Heart right ventricle (tissue), 16 donors: ENCODE measurements at regions of chr11 and their contacts with region 1.

Region 1: GRCh38 chr11:68383976-68384501 is 71.6 kb downstream of the LRP5 start:
- DNase-seq: peak; percentile 74 to 75
- ATAC-seq: peak in 5 of 8 donors; percentile 3 to 50 (median 26)
- H3K4me3 ChIP-seq: no peak overlapping the region
- H3K27ac ChIP-seq: peak overlapping the region in 4 of 10 donors; percentile 35 to 91 (median 60)
- H3K4me1 ChIP-seq: peaks cover 11 to 57% (median 53%) of the 10 kb centered on the region in 9 donors
- H3K27me3 ChIP-seq: no peaks in the 10 kb centered on the region
- CTCF ChIP-seq: peak; percentile 88 to 95 (median 93)

Region 2: GRCh38 chr11:68257475-68258362 is 126.3 kb before region 1 on chr11:
- intact Hi-C with region 1: loop called (anchors 2 to 5 kb)
- DNase-seq: peak; percentile 94 to 97
- ATAC-seq: peak; percentile 70 to 91 (median 86)
- H3K4me3 ChIP-seq: peak overlapping the region in 4 of 10 donors; percentile 18 to 23 (median 20)
- H3K27ac ChIP-seq: peak overlapping the region in 1 of 10 donors; percentile 36
- H3K4me1 ChIP-seq: peaks cover 0 to 30% (median 6%) of the 10 kb centered on the region in 9 donors
- H3K27me3 ChIP-seq: no peaks in the 10 kb centered on the region
- CTCF ChIP-seq: peak; percentile 78 to 94 (median 89)

Region 3: DNA sequence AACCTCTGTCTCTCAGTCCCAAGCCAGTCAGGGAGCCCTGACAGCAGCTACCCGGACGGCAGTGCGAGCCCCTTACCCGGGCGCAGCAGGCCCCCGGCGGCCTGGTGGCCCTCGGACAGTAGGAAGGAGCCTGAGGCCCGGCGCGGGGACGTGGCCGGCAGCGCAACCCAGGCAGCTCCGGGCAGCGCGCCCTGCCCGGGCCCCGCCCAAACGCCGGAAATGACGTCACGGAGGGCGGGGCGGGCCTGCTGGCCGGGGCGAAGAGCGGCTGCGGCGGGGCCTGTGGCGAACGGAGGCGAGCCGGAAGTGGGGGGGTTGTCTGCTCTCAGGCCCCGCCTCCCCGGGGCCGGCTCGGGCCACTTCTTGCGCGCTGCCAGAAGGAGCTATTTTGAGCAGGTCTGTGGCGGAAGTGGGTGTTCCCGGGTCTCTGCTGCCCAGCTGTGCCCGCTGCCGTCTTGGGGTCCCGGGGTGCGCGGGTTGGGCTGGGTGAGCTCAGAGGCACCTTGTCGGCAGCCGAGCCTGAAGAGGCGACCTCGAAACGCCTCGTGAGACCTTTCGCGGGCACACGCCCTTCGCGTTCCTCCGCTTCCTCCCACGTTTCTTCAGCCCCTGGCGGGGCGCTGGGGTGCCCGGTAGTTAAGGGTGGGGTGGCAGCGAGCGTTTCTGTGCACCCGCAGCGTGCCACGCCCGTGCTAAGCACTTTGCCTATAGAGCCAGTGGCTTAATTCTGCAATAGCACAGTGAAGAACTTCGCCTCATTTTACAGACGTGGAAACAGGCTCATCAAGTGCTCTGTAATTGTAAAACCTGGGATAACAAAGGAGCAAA is 112.0 kb before region 1 on chr11 and contains the start of gene C11orf24:
- intact Hi-C with region 1: loop called in 5 of 10 experiments (anchors 2 to 5 kb)
- DNase-seq: peak; percentile 94 to 96
- ATAC-seq: peak; percentile 95 to 98 (median 97)
- H3K4me3 ChIP-seq: peak within 1 kb of the TSS; percentile 60 to 91 (median 80)
- H3K27ac ChIP-seq: peak within 1 kb of the TSS; percentile 76 to 99 (median 95)
- H3K4me1 ChIP-seq: peaks cover 8 to 47% (median 32%) of the 10 kb centered on the region in 9 donors
- H3K27me3 ChIP-seq: no peaks in the 10 kb centered on the region
- CTCF ChIP-seq: no peak
- total RNA-seq, gene C11orf24: 14.9 to 45.6 (median 28.1) TPM

Region 4: DNA sequence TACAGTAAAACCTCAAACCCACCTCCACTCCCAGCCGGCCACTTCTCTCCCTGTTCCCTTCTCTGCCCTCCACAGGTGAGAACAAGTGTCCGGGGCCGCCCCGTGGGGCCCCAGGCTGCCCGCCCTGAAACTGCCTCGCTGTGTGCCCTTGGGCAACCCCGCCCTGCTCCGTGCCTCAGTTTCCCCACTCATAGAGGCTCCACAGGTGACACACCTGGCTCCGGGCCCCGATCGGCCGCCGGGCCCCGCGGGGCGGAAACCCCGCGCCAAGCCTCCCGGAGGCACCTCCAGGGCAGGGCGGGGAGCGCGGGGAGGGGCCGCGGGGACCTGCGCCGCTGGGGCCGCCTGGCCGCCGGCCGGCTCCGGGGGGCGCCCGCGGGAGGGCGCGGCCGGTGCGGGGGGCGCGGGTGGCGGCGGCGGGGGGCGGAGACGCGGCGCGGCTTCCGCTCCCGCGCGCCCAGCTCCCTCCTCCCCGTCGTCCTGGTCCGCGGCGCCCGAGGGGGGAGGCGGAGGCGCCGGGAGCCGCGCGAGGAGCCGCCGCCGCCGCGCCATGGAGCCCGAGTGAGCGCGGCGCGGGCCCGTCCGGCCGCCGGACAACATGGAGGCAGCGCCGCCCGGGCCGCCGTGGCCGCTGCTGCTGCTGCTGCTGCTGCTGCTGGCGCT is 71.8 kb before region 1 on chr11 and contains the start of gene LRP5:
- intact Hi-C with region 1: loop called in 6 of 10 experiments (anchors 2 to 5 kb)
- DNase-seq: no peak
- ATAC-seq: peak in 3 of 8 donors; percentile 15 to 21 (median 17)
- H3K4me3 ChIP-seq: peak within 1 kb of the TSS; percentile 60 to 89 (median 72)
- H3K27ac ChIP-seq: peak within 1 kb of the TSS; percentile 72 to 95 (median 86)
- H3K4me1 ChIP-seq: peaks cover 22 to 49% (median 45%) of the 10 kb centered on the region in 9 donors
- H3K27me3 ChIP-seq: peaks cover 0 to 32% (median 0%) of the 10 kb centered on the region in 7 donors
- CTCF ChIP-seq: no peak
- total RNA-seq, gene LRP5: 33.9 to 73.3 (median 46.3) TPM

Region 5: GRCh38 chr11:68584097-68584496 is 200.1 kb after region 1 on chr11:
- intact Hi-C with region 1: no loop called
- DNase-seq: peak; percentile 46 to 47
- ATAC-seq: peak in 3 of 8 donors; percentile 15 to 35 (median 19)
- H3K4me3 ChIP-seq: no peak overlapping the region
- H3K27ac ChIP-seq: peak overlapping the region in 9 of 10 donors; percentile 19 to 87 (median 76)
- H3K4me1 ChIP-seq: peaks cover 10 to 66% (median 35%) of the 10 kb centered on the region in 9 donors
- H3K27me3 ChIP-seq: no peaks in the 10 kb centered on the region
- CTCF ChIP-seq: peak; percentile 31 to 73 (median 61)

Region 6: DNA sequence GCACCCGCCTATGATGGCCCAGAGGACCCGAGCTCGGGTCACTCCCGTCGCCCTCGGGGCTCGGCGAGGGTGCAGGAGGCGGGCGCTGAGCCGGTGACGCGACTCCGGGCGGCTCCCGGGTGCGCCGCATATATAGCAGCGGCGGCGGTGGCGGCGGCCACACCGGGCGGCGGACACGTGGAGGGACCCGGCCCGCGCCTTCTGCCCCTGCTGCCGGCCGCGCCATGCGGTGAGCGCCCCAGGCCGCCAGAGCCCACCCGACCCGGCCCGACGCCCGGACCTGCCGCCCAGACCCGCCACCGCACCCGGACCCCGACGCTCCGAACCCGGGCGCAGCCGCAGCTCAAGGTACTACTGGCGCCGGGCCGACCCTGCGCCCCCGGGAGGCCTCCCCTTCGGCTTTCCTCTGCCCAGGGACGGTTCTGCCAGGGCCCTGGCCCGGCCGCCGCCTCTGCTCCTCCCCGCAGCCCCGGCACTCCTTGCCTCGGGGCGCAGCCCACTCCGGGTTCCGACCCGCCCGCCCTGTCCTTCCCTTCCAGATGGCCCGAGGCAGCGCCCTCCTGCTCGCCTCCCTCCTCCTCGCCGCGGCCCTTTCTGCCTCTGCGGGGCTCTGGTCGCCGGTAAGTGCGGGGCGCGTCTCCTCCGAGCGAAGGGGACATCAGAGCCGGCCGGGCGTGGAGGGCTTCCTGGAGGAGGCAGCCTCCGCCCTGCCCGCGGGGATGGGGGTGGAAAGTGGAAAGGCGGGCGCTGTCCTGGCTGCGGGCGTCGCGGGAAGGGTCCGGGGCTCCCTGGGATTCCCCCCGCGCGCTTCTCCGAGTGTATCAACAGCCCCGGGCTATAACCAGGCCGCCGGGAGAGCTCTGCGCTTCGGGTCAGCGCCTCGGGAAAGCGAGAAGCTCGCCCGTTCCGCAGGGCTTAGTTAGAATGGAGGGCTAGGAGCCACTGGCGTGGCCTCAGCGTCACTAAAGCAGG is 300.6 kb after region 1 on chr11 and contains the start of gene GAL:
- intact Hi-C with region 1: no loop called
- DNase-seq: no peak
- ATAC-seq: peak in 2 of 8 donors; percentile 36 to 61
- H3K4me3 ChIP-seq: peak within 1 kb of the TSS; percentile 10 to 47 (median 33)
- H3K27ac ChIP-seq: no peak within 1 kb of the TSS
- H3K4me1 ChIP-seq: peaks cover 2 to 12% (median 9%) of the 10 kb centered on the region in 9 donors
- H3K27me3 ChIP-seq: peaks cover 16 to 73% (median 61%) of the 10 kb centered on the region in 7 donors
- CTCF ChIP-seq: no peak
- total RNA-seq, gene GAL: 0.42 to 1.6 (median 0.61) TPM in 3 of 10 donors, not detected in the others